CD4-positive, alpha-beta memory T cell (primary cell): ENCODE measurements at regions of chr16 and their contacts with region 1.

Region 1: GRCh38 chr16:53822936-53823529 is 119.1 kb downstream of the FTO start:
- DNase-seq: peak; percentile 62 to 82 (median 77)
- H3K4me3 ChIP-seq: no peak overlapping the region
- H3K4me3 Mint-ChIP-seq: no peak overlapping the region
- H3K27ac ChIP-seq: no peak overlapping the region
- H3K27ac Mint-ChIP-seq: no peak overlapping the region
- H3K4me1 ChIP-seq: peaks cover 13% of the 10 kb centered on the region
- H3K4me1 Mint-ChIP-seq: peaks cover 4 to 16% (median 12%) of the 10 kb centered on the region in 4 donors
- H3K27me3 ChIP-seq: no peaks in the 10 kb centered on the region
- H3K27me3 Mint-ChIP-seq: no peaks in the 10 kb centered on the region

Region 2: DNA sequence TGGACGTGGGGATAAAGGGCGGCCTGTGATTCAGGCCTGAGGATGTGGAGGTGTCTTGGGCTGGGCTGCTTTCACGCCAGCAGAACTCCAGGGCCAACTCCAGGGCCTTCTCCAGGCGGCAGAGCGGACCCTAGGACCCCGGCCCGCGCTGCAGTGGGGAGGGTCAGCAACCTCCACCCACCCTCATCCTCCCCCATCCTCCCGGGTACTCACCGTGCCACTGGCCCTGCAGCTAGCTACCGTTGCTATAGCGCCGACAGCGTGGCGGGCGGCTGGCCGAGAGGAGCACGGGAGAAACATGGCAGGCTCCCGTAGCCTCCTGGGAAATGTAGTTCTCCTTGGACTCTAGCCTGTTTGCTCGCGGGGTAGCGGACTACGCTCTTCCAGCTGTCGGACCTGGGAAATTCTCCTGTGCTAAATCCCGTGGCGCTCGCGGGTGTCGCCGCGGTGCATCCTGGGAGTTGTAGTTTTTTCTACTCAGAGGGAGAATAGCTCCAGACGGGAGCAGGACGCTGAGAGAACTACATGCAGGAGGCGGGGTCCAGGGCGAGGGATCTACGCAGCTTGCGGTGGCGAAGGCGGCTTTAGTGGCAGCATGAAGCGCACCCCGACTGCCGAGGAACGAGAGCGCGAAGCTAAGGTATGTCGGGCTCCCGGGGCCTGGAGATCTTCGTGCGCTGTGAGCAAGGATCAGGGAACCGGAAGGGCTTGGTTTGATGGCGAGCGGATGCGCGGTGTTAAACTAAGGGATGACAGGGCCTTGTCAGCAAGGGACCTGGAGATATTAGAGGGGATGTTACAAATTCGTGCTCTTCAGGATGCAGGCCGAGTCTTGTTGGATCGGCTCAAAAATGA is 119.2 kb before region 1 on chr16 and contains the starts of genes FTO and RPGRIP1L:
- CTCF ChIA-PET with region 1: no interaction called
- POLR2A ChIA-PET with region 1: no interaction called
- intact Hi-C with region 1: loop called (anchors 2 kb)
- DNase-seq: peak; percentile 95 to 97 (median 96)
- H3K4me3 ChIP-seq: peak within 1 kb of the TSS; percentile 54 to 85
- H3K4me3 Mint-ChIP-seq: peak within 1 kb of the TSS; percentile 96 to 100 (median 98)
- H3K27ac ChIP-seq: peak within 1 kb of the TSS; percentile 59
- H3K27ac Mint-ChIP-seq: peak within 1 kb of the TSS; percentile 90 to 99 (median 97)
- H3K4me1 ChIP-seq: peaks cover 23% of the 10 kb centered on the region
- H3K4me1 Mint-ChIP-seq: peaks cover 22 to 47% (median 36%) of the 10 kb centered on the region in 4 donors
- H3K27me3 ChIP-seq: no peaks in the 10 kb centered on the region
- H3K27me3 Mint-ChIP-seq: no peaks in the 10 kb centered on the region
- total RNA-seq, gene FTO: 61.5 to 68.8 TPM
- total RNA-seq, gene RPGRIP1L: 4.2 to 4.3 TPM